ENCODE measurements at regions of chr10 and their contacts with region 1.

Region 1: DNA sequence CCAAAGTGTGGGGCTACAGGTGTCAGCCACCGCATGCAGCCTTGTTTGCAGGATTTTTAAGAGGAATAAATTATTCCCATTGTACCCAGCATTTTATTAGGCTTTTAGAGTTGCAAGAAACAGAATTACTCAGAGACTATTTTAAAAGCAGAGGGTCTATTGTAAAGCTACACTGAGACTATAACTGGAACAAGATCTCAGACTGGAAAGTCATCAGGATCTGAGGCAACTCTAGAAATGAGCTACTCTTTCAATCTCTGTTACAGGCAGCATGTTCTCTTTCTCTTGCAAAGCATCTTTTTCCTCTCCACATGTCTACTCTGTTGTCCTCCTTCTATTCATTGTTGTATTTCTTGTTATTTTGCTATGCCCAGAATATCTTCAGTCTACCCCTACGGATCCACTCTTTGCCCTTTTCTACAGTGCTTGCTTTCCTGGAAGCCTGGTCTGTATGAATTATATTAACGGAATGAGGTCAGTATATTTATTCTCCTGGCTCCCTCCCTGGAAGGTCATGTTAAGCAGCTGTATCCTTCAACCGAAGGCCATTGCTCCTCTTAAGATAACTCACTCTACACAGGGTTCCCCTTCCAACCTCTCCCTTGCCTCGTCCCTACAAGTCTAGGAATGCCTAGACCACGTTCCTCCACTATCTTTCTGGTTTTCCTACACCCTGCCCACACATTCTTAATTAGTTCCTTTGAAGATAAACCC is 27.7 kb upstream of the MICU1 start:
- DNase-seq: no peak
- H3K4me3 ChIP-seq: no peak overlapping the region
- H3K4me3 Mint-ChIP-seq: no peak overlapping the region
- H3K27ac ChIP-seq: no peak overlapping the region
- H3K27ac Mint-ChIP-seq: peak overlapping the region in 1 of 8 donors; percentile 4
- H3K4me1 ChIP-seq: no peaks in the 10 kb centered on the region
- H3K4me1 Mint-ChIP-seq: no peaks in the 10 kb centered on the region
- H3K27me3 ChIP-seq: no peaks in the 10 kb centered on the region
- H3K27me3 Mint-ChIP-seq: no peaks in the 10 kb centered on the region

Region 2: DNA sequence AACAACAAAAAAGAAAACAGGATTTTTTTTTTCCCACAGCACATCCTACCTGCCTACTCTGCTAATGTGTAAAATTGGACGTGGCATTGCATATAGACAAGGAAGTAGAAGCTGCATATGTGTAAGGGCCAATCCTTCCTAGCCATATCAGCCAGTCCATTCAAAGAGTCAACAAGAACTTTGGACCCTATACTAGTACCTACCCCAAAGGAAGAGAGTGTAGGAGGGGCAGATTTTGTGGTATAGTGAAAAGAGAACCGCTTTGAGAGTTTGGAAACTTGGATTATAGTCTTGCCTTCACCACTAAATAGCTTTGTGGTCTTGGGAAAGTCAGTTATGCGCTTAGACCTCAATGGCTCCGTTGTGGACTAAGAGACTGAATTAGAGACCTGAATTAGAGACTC is 26.3 kb after region 1 on chr10:
- CTCF ChIA-PET with region 1: no interaction called
- POLR2A ChIA-PET with region 1: interaction called, 12 read pairs
- DNase-seq: no peak
- H3K4me3 ChIP-seq: no peak overlapping the region
- H3K4me3 Mint-ChIP-seq: no peak overlapping the region
- H3K27ac ChIP-seq: no peak overlapping the region
- H3K27ac Mint-ChIP-seq: no peak overlapping the region
- H3K4me1 ChIP-seq: no peaks in the 10 kb centered on the region
- H3K4me1 Mint-ChIP-seq: peaks cover 0 to 5% (median 0%) of the 10 kb centered on the region in 3 donors
- H3K27me3 ChIP-seq: no peaks in the 10 kb centered on the region
- H3K27me3 Mint-ChIP-seq: peaks cover 2 to 8% of the 10 kb centered on the region in 2 donors